ENCODE measurements at regions of chr9 and their contacts with region 1.

Region 1: DNA sequence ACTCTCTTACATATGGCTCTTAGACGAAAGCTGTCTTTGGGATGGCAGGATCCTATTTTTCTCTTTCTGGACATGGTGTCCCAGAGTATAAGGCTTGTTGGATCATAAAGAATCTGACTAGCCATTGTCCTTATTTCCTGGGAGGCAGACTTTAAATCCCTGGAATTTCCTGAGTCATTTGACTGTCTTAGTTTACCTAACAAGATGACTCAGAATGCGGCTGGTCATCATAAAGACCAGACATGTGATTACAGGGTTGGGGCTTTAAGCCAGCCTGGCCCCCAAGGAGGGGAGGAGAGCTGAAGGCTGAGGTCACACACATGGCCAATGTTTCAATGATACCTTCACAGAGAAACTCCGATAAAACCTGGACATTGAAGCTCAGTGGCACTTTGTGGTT is 37.2 kb downstream of the FAM240B start:
- DNase-seq: no peak
- ATAC-seq: no peak
- H3K4me3 Mint-ChIP-seq: no peak overlapping the region
- H3K27ac Mint-ChIP-seq: no peak overlapping the region
- H3K4me1 Mint-ChIP-seq: peaks cover 6% of the 10 kb centered on the region
- H3K27me3 Mint-ChIP-seq: no peaks in the 10 kb centered on the region

Region 2: DNA sequence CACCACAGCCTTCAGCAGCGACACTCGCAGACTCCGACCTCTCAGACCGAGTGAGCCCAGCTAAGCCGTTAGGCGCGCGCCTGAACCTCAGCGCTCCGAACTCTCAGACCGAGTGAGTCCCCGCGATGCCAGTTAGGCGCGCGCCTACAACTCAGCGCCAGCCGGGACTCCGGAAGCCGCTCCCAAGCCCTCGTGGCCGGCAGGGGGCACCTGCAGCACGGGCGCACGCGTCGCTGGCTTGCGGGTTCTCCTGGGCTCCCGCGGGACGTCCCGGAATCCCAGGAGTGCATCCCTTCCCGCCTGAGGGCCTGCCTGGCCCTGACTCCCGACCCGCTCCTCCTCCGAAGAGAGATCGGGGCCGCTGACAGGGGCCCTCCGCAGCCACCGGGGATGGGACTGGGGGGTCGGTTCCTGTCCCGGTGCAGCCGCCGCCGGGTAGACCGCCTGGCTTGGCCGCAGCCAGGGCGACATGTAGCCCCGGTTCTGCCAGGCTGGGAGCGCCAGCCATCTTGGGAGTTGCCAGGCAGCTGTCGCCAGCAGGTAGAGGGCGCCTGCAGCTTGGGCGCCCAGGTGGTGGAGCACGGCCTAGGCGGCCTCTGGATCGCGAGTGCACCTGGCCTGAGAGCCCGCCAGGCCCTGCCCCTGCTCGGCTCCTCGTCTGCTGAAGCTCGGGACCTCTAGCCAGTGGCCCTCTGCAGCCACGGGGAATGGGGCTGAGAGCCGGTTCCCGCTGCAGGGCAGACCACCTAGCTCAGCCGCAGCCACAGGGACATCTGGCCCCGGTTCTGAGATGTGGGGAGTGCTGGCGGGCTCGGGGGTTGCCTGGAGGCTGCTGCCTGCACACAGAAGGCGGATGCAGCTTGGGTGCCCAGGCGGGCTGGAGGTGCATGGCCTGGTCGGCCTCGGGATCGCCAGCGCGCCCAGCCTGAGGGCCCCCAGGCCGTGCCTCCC is 62.0 kb before region 1 on chr9 and contains the start of gene ANKRD18A:
- CTCF ChIA-PET with region 1: no interaction called
- POLR2A ChIA-PET with region 1: no interaction called
- intact Hi-C with region 1: loop called in 1 of 2 experiments (anchors 5 kb)
- DNase-seq: peak; percentile 89
- ATAC-seq: peak; percentile 89
- H3K4me3 Mint-ChIP-seq: peak within 1 kb of the TSS; percentile 76
- H3K27ac Mint-ChIP-seq: peak within 1 kb of the TSS; percentile 83
- H3K4me1 Mint-ChIP-seq: peaks cover 10% of the 10 kb centered on the region
- H3K27me3 Mint-ChIP-seq: peaks cover 26% of the 10 kb centered on the region
- total RNA-seq, gene ANKRD18A: 6.4 to 7.5 TPM

Measured in activated CD4-positive, alpha-beta T cell treated with anti-CD3 and anti-CD28 coated beads for 36 hours (primary cell).